Tibial artery (tissue), 4 donors: ENCODE measurements at regions of chr19 and their contacts with region 1.

Region 1: DNA sequence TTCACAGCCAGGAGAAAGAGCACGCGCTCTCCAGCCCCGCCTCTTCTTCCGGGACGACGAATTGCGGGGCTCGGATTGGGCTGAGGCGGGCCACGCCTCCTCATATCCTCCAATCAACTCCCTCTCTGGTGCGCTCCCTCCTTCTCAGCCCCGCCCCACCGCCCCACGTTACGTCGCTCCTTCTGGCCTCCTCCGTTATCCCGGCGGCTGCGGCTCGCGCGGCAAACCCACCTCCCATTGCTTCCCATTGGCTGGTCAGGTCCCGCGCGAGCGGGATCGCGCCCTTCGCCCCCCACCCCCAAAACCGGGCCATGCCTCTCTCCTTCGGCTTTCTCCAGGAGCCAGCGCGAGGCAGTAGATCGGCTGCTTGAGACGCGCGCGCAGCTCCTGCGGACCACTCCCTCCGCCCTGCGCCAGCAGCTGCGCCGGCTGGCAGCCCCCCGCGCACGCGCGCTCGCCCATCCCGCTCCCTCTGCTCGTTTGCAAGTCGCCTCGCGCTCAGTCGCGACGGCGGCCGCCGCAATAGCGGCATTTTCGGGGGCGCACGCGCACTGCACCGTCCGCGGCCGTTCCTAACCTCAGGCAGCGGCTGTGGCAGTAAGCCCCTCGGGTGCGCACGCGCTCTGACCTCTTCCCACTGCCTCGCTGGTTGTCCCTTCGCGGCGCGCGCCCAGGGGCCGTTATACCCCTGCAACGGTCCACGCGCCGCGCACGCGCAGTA is 512 bp upstream of the ARHGAP35 start:
- DNase-seq: peak; percentile 97 to 100
- H3K4me3 ChIP-seq: peak overlapping the region; percentile 88 to 93
- H3K27ac ChIP-seq: peak overlapping the region; percentile 94 to 99
- H3K4me1 ChIP-seq: peaks cover 0 to 59% (median 41%) of the 10 kb centered on the region in 4 donors
- H3K27me3 ChIP-seq: no peaks in the 10 kb centered on the region
- CTCF ChIP-seq: no peak

Region 2: DNA sequence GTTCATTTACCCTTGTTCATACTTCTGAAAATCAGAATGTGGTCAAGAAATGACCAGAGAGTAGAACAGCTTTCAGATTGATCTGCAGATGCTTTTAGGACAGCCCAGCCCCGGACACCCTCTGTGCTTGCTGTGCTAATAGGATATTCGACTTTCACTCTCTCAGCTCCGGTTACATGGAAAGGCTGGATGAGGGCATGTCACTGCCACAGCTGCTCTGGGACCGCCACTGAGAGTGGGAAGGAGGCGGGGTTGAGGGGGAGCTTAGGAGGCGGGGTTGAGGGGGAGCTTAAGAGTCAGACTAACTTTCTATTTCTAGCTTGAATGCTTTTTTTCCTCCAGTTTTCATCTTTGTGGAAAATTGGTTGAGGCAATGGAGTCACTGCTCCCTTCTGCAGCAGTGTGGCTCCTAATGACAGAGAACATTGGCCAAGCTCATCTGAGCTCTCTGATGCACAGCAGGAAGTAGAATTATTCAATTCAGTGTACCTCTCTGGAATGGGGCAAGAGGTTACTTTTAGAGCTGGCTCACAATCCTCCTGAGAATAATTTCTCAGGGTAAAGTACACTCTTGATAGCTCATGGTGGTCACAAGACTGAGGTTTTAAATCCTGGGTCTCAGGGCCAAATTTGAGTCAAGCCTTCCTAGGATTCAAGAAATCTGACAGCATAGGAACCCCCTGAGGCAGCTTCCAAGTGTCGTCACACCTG is 84.8 kb after region 1 on chr19:
- intact Hi-C with region 1: loop called (anchors 10 kb)
- DNase-seq: peak; percentile 76 to 90
- H3K4me3 ChIP-seq: peak overlapping the region; percentile 18 to 38
- H3K27ac ChIP-seq: peak overlapping the region; percentile 87 to 88
- H3K4me1 ChIP-seq: peaks cover 0 to 68% (median 55%) of the 10 kb centered on the region in 4 donors
- H3K27me3 ChIP-seq: no peaks in the 10 kb centered on the region
- CTCF ChIP-seq: no peak

Region 3: DNA sequence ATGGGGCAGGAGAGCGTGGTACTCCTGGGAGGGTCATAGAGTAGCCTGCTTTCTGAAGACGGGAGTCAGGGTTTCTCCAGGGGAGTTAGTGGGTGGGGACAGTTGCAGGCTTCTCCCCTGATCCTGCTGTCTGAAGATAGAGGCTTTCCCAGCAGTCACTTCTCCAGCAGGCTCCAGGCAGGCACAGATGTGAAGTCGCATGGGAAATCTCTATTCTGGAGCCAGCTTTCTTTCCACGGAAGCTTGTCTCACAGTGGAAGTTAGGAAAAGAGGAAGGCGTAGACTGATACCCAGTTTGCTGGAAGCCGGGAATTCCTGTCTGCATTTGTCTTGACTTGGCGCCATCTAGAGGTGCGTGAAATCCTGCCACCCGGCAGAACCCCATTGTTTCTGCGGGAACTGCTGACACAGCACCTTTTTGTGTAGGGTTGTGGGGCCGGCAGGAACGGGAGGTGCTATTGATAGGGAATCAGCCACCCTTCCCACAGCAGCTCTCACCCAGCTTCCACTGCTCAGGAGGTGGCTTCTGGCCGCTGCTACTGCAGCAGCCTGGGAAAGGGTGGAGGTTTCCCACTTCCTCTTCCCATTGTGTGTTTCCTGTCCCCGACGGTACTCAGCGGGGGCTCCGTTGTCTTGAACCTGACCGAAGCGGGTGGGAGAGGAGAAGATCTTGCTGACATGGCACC is 130.8 kb after region 1 on chr19:
- intact Hi-C with region 1: loop called (anchors 2 kb)
- DNase-seq: peak; percentile 83 to 89
- H3K4me3 ChIP-seq: no peak overlapping the region
- H3K27ac ChIP-seq: peak overlapping the region; percentile 25 to 60
- H3K4me1 ChIP-seq: peaks cover 0 to 16% (median 9%) of the 10 kb centered on the region in 4 donors
- H3K27me3 ChIP-seq: no peaks in the 10 kb centered on the region
- CTCF ChIP-seq: peak; percentile 79 to 86

Region 4: GRCh38 chr19:47005873-47006272 is 145.6 kb after region 1 on chr19:
- intact Hi-C with region 1: no loop called
- DNase-seq: no peak
- H3K4me3 ChIP-seq: no peak overlapping the region
- H3K27ac ChIP-seq: no peak overlapping the region
- H3K4me1 ChIP-seq: peaks cover 0 to 12% (median 6%) of the 10 kb centered on the region in 4 donors
- H3K27me3 ChIP-seq: peaks cover 0 to 4% of the 10 kb centered on the region in 2 donors
- CTCF ChIP-seq: no peak

Region 5: GRCh38 chr19:47161876-47162489 is 301.7 kb after region 1 on chr19:
- intact Hi-C with region 1: no loop called
- DNase-seq: no peak
- H3K4me3 ChIP-seq: no peak overlapping the region
- H3K27ac ChIP-seq: no peak overlapping the region
- H3K4me1 ChIP-seq: peaks cover 3 to 26% (median 15%) of the 10 kb centered on the region in 4 donors
- H3K27me3 ChIP-seq: no peaks in the 10 kb centered on the region
- CTCF ChIP-seq: no peak